IMR-90 (cell line): ENCODE measurements at regions of chr1 and their contacts with region 1.

Region 1: GRCh38 chr1:174726167-174726879 is 273.4 kb upstream of the CACYBP start:
- DNase-seq: peak; percentile 55
- ATAC-seq: no peak
- H3K4me3 ChIP-seq: no peak overlapping the region
- H3K27ac ChIP-seq: no peak overlapping the region
- H3K4me1 ChIP-seq: no peaks in the 10 kb centered on the region
- H3K27me3 ChIP-seq: no peaks in the 10 kb centered on the region
- CTCF ChIP-seq: peak; percentile 64
- POLR2A ChIP-seq: no peak
- RAD21 ChIP-seq: peak; percentile 58

Region 2: DNA sequence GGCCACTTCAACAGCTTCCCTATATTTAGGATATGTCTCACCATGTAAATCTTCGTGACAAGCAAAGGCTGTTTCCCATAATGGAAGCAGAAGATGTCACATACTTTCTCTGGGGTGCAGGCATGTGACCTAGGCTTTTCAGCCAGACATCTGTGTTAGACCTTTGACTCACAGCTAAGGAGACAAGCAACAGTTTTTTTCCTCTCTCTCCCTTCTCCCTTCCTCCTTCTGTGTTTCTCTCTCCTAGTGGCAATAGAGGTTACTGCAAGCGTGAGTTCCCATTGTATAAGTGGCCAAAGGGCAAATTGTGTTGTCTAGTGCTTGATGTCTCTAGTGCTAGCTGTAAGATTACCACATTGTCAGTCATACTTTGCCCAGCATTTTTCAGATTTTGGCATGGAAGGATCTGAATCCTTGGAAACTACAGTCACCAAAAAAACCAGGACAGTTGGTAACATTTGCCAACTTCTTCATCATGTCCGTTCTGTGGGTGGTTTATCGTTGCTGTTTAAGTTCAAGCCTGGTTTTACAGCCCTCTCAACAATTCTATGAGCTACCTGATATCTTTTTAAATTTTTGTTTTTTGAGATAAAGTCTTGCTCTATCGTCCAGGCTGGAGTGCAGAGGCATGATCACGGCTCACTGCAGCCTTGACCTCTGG is 611.4 kb before region 1 on chr1:
- CTCF ChIA-PET with region 1: no interaction called
- POLR2A ChIA-PET with region 1: no interaction called
- dilution Hi-C with region 1: no loop called
- in situ Hi-C with region 1: no loop called
- intact Hi-C with region 1: no loop called
- DNase-seq: peak; percentile 40
- ATAC-seq: peak; percentile 84
- H3K4me3 ChIP-seq: no peak overlapping the region
- H3K27ac ChIP-seq: no peak overlapping the region
- H3K4me1 ChIP-seq: no peaks in the 10 kb centered on the region
- H3K27me3 ChIP-seq: no peaks in the 10 kb centered on the region; the same call in 1 of the 2 replicates
- CTCF ChIP-seq: peak; percentile 47
- POLR2A ChIP-seq: no peak
- RAD21 ChIP-seq: peak; percentile 11; the same call in 1 of the 2 replicates

Region 3: GRCh38 chr1:174413632-174414031 is 312.7 kb before region 1 on chr1:
- CTCF ChIA-PET with region 1: interaction called, 3 read pairs
- POLR2A ChIA-PET with region 1: no interaction called
- dilution Hi-C with region 1: no loop called
- in situ Hi-C with region 1: no loop called
- intact Hi-C with region 1: loop called (anchors 5 kb)
- DNase-seq: no peak
- ATAC-seq: no peak
- H3K4me3 ChIP-seq: no peak overlapping the region
- H3K27ac ChIP-seq: no peak overlapping the region
- H3K4me1 ChIP-seq: no peaks in the 10 kb centered on the region
- H3K27me3 ChIP-seq: no peaks in the 10 kb centered on the region
- CTCF ChIP-seq: 0 out of 2 replicates have a peak, but pooled peaks have one; percentile 24
- POLR2A ChIP-seq: no peak
- RAD21 ChIP-seq: no peak